CD4-positive, alpha-beta memory T cell (primary cell): ENCODE measurements at regions of chr18 and their contacts with region 1.

Region 1: DNA sequence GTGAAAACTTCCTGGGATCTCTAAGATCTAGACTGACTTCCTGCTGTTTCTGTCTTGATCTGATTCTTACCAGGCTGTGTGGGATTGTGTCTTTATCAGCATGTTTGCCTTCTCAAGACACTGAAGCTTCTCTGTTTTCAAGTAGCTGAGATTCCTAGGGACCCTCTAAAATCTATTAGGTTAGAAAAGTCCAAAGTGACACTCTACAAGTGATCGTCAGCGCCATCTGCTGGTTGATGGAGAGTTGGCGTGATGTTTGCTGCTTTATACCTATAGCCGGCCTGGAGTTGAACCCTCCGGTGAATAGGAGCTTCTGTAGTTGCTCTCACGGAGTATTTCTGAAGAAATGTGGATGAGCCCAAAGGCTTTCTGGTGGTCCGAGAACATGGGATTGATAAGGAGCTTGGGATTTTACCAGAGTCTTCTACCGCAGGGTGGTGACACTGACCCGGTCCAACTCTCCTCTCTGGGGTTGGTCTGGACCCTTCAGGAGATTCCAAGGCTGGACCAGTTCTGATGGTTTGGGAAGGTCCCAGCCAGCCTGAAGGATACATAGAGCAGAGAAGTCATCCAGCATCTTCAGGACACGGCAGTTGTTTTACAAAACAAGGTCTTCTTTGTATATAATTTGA is 96.0 kb upstream of the TTC39C start:
- DNase-seq: peak; percentile 60 to 76 (median 68)
- H3K4me3 ChIP-seq: no peak overlapping the region
- H3K4me3 Mint-ChIP-seq: peak overlapping the region in 3 of 8 donors; percentile 21 to 41 (median 37)
- H3K27ac ChIP-seq: no peak overlapping the region
- H3K27ac Mint-ChIP-seq: peak overlapping the region in 5 of 7 donors; percentile 19 to 69 (median 26)
- H3K4me1 ChIP-seq: peaks cover 21% of the 10 kb centered on the region
- H3K4me1 Mint-ChIP-seq: peaks cover 23 to 29% (median 24%) of the 10 kb centered on the region in 4 donors
- H3K27me3 ChIP-seq: no peaks in the 10 kb centered on the region
- H3K27me3 Mint-ChIP-seq: no peaks in the 10 kb centered on the region

Region 2: GRCh38 chr18:23629444-23629946 is 289.0 kb before region 1 on chr18:
- CTCF ChIA-PET with region 1: interaction called, 19 read pairs
- POLR2A ChIA-PET with region 1: no interaction called
- intact Hi-C with region 1: no loop called
- DNase-seq: no peak
- H3K4me3 ChIP-seq: no peak overlapping the region
- H3K4me3 Mint-ChIP-seq: no peak overlapping the region
- H3K27ac ChIP-seq: no peak overlapping the region
- H3K27ac Mint-ChIP-seq: peak overlapping the region in 1 of 7 donors; percentile 2
- H3K4me1 ChIP-seq: no peaks in the 10 kb centered on the region
- H3K4me1 Mint-ChIP-seq: peaks cover 0 to 4% (median under 1%) of the 10 kb centered on the region in 4 donors
- H3K27me3 ChIP-seq: no peaks in the 10 kb centered on the region
- H3K27me3 Mint-ChIP-seq: peaks cover 0 to under 1% of the 10 kb centered on the region in 2 donors

Region 3: DNA sequence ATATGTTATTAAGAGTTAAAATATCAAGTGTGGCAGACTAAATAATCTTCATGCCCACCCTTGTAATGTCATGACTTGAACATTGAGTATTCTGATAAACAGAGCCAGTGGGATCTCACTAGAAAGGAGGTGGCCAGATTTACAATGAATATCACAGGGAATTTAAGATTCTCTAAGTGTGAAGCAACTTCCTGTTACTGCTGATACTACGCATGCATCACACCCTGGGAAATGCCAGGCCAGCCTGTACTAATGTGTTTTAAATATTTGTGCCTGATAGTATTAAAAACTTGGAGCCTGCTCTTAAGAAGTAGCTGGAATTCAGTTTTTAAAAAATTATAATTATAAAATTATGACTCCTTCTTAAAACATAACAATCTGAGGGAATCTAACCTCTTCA is 80.9 kb before region 1 on chr18:
- CTCF ChIA-PET with region 1: interaction called, 18 read pairs
- POLR2A ChIA-PET with region 1: no interaction called
- intact Hi-C with region 1: no loop called
- DNase-seq: no peak
- H3K4me3 ChIP-seq: no peak overlapping the region
- H3K4me3 Mint-ChIP-seq: no peak overlapping the region
- H3K27ac ChIP-seq: no peak overlapping the region
- H3K27ac Mint-ChIP-seq: no peak overlapping the region
- H3K4me1 ChIP-seq: no peaks in the 10 kb centered on the region
- H3K4me1 Mint-ChIP-seq: peaks cover 2 to 7% (median 6%) of the 10 kb centered on the region in 4 donors
- H3K27me3 ChIP-seq: no peaks in the 10 kb centered on the region
- H3K27me3 Mint-ChIP-seq: no peaks in the 10 kb centered on the region

Region 4: DNA sequence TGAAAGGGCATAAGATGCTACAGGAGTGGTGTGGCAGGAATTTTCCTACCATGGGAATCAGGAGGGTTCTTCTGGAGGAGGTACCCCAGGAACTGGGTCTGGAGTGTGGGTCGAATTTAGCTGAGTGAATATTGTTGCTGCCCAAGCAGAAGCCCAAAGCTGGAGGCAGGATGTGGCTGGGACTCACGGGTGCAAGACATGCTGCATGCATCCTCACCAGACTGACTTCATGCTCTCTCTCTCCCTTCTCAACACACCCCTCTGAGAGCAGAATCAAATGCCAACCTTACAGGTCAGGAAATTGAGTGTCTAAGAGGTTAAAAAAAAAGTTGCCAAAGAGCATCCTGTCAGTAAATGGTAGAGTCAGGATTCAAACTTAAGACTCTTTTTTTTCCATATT is 17.3 kb after region 1 on chr18:
- CTCF ChIA-PET with region 1: interaction called, 26 read pairs
- POLR2A ChIA-PET with region 1: interaction called, 3 read pairs
- intact Hi-C with region 1: no loop called
- DNase-seq: peak; percentile 22 to 49 (median 34)
- H3K4me3 ChIP-seq: no peak overlapping the region
- H3K4me3 Mint-ChIP-seq: peak overlapping the region in 7 of 8 donors; percentile 33 to 75 (median 66)
- H3K27ac ChIP-seq: no peak overlapping the region
- H3K27ac Mint-ChIP-seq: peak overlapping the region; percentile 12 to 89 (median 49)
- H3K4me1 ChIP-seq: peaks cover 58% of the 10 kb centered on the region
- H3K4me1 Mint-ChIP-seq: peaks cover 36 to 71% (median 53%) of the 10 kb centered on the region in 4 donors
- H3K27me3 ChIP-seq: no peaks in the 10 kb centered on the region
- H3K27me3 Mint-ChIP-seq: no peaks in the 10 kb centered on the region

Region 5: GRCh38 chr18:23967321-23968089 is 49.0 kb after region 1 on chr18:
- CTCF ChIA-PET with region 1: interaction called, 6 read pairs
- POLR2A ChIA-PET with region 1: no interaction called
- intact Hi-C with region 1: loop called (anchors 5 kb)
- DNase-seq: peak; percentile 32 to 60 (median 39)
- H3K4me3 ChIP-seq: peak overlapping the region in 1 of 2 donors; percentile 38
- H3K4me3 Mint-ChIP-seq: peak overlapping the region in 7 of 8 donors; percentile 60 to 87 (median 80)
- H3K27ac ChIP-seq: peak overlapping the region; percentile 17
- H3K27ac Mint-ChIP-seq: peak overlapping the region; percentile 89 to 99 (median 95)
- H3K4me1 ChIP-seq: peaks cover 90% of the 10 kb centered on the region
- H3K4me1 Mint-ChIP-seq: peaks cover 66 to 89% (median 81%) of the 10 kb centered on the region in 4 donors
- H3K27me3 ChIP-seq: no peaks in the 10 kb centered on the region
- H3K27me3 Mint-ChIP-seq: no peaks in the 10 kb centered on the region

Region 6: GRCh38 chr18:24014062-24014985 is 95.8 kb after region 1 on chr18 and contains the start of gene TTC39C:
- CTCF ChIA-PET with region 1: interaction called, 39 read pairs
- POLR2A ChIA-PET with region 1: interaction called, 8 read pairs
- intact Hi-C with region 1: loop called (anchors 2 kb)
- DNase-seq: peak; percentile 78 to 88 (median 82)
- H3K4me3 ChIP-seq: peak within 1 kb of the TSS; percentile 73 to 83
- H3K4me3 Mint-ChIP-seq: peak within 1 kb of the TSS; percentile 92 to 100 (median 96)
- H3K27ac ChIP-seq: peak within 1 kb of the TSS; percentile 75
- H3K27ac Mint-ChIP-seq: peak within 1 kb of the TSS; percentile 90 to 98 (median 94)
- H3K4me1 ChIP-seq: peaks cover 77% of the 10 kb centered on the region
- H3K4me1 Mint-ChIP-seq: peaks cover 53 to 87% (median 64%) of the 10 kb centered on the region in 4 donors
- H3K27me3 ChIP-seq: no peaks in the 10 kb centered on the region
- H3K27me3 Mint-ChIP-seq: no peaks in the 10 kb centered on the region
- total RNA-seq, gene TTC39C: 168 to 180 TPM